Caco-2 (cell line): ENCODE measurements at regions of chr21 and their contacts with region 1.

Region 1: GRCh38 chr21:38805328-38806152 is at the start of gene ETS2:
- DNase-seq: peak; percentile 86 to 94
- H3K4me3 ChIP-seq: peak within 1 kb of the TSS; percentile 86
- H3K4me3 Mint-ChIP-seq: peak within 1 kb of the TSS; percentile 83
- H3K27ac Mint-ChIP-seq: peak within 1 kb of the TSS; percentile 87
- H3K4me1 ChIP-seq: peaks cover 28% of the 10 kb centered on the region
- H3K4me1 Mint-ChIP-seq: peaks cover 30% of the 10 kb centered on the region
- H3K27me3 ChIP-seq: no peaks in the 10 kb centered on the region
- H3K27me3 Mint-ChIP-seq: no peaks in the 10 kb centered on the region
- CTCF ChIP-seq: peak in 1 of 2 experiments; percentile 2
- total RNA-seq, gene ETS2: 20.4 and 26.9 TPM in 2 replicates

Region 2: DNA sequence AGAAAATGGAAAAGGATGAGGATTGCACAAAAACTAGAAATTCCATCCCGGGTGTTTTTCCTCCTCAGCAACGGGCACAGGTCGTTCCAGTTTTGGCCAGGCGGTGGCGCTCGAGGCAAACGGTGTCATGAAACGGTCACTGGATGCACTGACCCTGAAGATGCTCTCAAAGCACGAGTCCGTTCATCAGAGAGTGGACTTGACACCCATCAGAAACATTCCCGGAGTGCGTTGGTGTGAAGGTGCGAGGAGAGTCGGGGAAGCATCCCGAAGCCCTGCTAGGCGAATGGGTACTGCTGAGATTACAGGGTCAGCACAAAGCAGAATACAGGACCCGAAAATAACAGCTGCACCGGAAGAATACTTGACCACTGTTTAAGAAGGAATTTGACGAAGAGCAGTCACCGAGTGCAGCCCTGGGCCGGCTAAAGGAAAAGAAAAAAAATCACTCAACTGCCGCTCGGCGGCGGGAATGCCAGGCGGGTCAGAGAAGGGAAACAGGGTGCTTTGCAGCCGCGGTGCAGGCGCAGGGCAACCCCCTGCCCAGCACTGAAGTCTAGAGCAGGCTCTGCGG is 71.5 kb before region 1 on chr21:
- CTCF ChIA-PET with region 1: no interaction called
- POLR2A ChIA-PET with region 1: no interaction called
- intact Hi-C with region 1: loop called (anchors 2 kb)
- DNase-seq: peak; percentile 81 to 90
- H3K4me3 ChIP-seq: no peak overlapping the region
- H3K4me3 Mint-ChIP-seq: peak overlapping the region; percentile 75
- H3K27ac Mint-ChIP-seq: peak overlapping the region; percentile 31
- H3K4me1 ChIP-seq: no peaks in the 10 kb centered on the region
- H3K4me1 Mint-ChIP-seq: peaks cover 7% of the 10 kb centered on the region
- H3K27me3 ChIP-seq: no peaks in the 10 kb centered on the region
- H3K27me3 Mint-ChIP-seq: no peaks in the 10 kb centered on the region
- CTCF ChIP-seq: peak; percentile 89

Region 3: DNA sequence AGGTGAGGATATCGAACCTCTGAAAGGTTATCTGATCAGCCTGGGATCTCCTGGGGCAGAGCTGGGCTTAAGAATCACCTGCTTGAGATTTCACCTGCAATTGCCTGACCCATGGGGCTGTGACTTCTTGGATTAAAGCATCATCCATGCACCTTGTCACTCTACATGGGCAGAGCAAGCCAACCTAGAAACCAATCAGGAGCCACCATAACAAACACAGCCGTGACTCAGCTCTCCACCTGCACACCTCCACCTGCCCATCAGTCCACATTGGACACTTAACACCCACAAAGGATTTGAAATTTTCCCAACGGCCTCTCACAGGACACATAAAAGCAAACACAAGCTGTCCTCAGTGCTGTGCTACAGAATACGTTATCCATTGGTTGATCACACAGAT is 34.9 kb before region 1 on chr21:
- CTCF ChIA-PET with region 1: interaction called, 4 read pairs
- POLR2A ChIA-PET with region 1: no interaction called
- intact Hi-C with region 1: loop called (anchors 2 kb)
- DNase-seq: no peak
- H3K4me3 ChIP-seq: no peak overlapping the region
- H3K4me3 Mint-ChIP-seq: no peak overlapping the region
- H3K27ac Mint-ChIP-seq: peak overlapping the region; percentile 74
- H3K4me1 ChIP-seq: peaks cover 33% of the 10 kb centered on the region
- H3K4me1 Mint-ChIP-seq: peaks cover 26% of the 10 kb centered on the region
- H3K27me3 ChIP-seq: no peaks in the 10 kb centered on the region
- H3K27me3 Mint-ChIP-seq: no peaks in the 10 kb centered on the region
- CTCF ChIP-seq: no peak

Region 4: GRCh38 chr21:38819714-38820183 is 14.2 kb after region 1 on chr21:
- CTCF ChIA-PET with region 1: no interaction called
- POLR2A ChIA-PET with region 1: interaction called, 3 read pairs
- intact Hi-C with region 1: loop called (anchors 2 kb)
- DNase-seq: peak; percentile 63 to 80
- H3K4me3 ChIP-seq: no peak overlapping the region
- H3K4me3 Mint-ChIP-seq: peak overlapping the region; percentile 38
- H3K27ac Mint-ChIP-seq: peak overlapping the region; percentile 85
- H3K4me1 ChIP-seq: peaks cover 15% of the 10 kb centered on the region
- H3K4me1 Mint-ChIP-seq: no peaks in the 10 kb centered on the region
- H3K27me3 ChIP-seq: no peaks in the 10 kb centered on the region
- H3K27me3 Mint-ChIP-seq: no peaks in the 10 kb centered on the region
- CTCF ChIP-seq: no peak

Region 5: GRCh38 chr21:38913120-38913892 is 107.8 kb after region 1 on chr21:
- CTCF ChIA-PET with region 1: interaction called, 16 read pairs
- POLR2A ChIA-PET with region 1: no interaction called
- intact Hi-C with region 1: loop called (anchors 10 kb)
- DNase-seq: peak; percentile 88 to 93
- H3K4me3 ChIP-seq: peak overlapping the region; percentile 16
- H3K4me3 Mint-ChIP-seq: no peak overlapping the region
- H3K27ac Mint-ChIP-seq: no peak overlapping the region
- H3K4me1 ChIP-seq: peaks cover 47% of the 10 kb centered on the region
- H3K4me1 Mint-ChIP-seq: peaks cover 18% of the 10 kb centered on the region
- H3K27me3 ChIP-seq: no peaks in the 10 kb centered on the region
- H3K27me3 Mint-ChIP-seq: no peaks in the 10 kb centered on the region
- CTCF ChIP-seq: no peak

Region 6: GRCh38 chr21:39125752-39126485 is 320.4 kb after region 1 on chr21:
- CTCF ChIA-PET with region 1: no interaction called
- POLR2A ChIA-PET with region 1: no interaction called
- intact Hi-C with region 1: loop called (anchors 1 kb)
- DNase-seq: peak; percentile 57 to 66
- H3K4me3 ChIP-seq: no peak overlapping the region
- H3K4me3 Mint-ChIP-seq: no peak overlapping the region
- H3K27ac Mint-ChIP-seq: no peak overlapping the region
- H3K4me1 ChIP-seq: no peaks in the 10 kb centered on the region
- H3K4me1 Mint-ChIP-seq: peaks cover 7% of the 10 kb centered on the region
- H3K27me3 ChIP-seq: no peaks in the 10 kb centered on the region
- H3K27me3 Mint-ChIP-seq: no peaks in the 10 kb centered on the region
- CTCF ChIP-seq: peak; percentile 44 to 68